Activated CD8-positive, alpha-beta T cell treated with anti-CD3 and anti-CD28 coated beads, Interleukin-2, amount 10 ng/mL, durations not matched to agents 7 days and 5 days (primary cell): ENCODE measurements at regions of chr19 and their contacts with region 1.

Region 1: DNA sequence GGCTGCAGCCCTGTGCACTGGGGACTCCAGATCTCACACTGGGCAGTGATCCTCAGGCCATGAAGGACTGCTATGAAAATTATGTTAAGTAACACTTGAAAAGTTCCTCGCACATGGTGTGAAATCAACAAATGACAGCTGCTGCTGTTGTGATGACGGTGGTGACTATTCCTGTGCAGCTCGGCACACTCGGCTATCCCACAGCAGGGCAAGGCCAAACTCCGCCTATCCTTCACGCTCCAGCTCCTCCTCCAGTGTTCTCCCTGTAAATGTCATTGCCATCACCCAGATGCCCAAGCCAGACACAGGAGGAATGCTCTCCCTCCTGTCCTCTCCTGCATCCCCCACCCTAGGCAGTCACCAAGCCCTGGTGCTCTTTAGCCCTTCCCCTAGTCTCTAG is 31.3 kb downstream of the GRIK5 start:
- DNase-seq: no peak
- ATAC-seq: no peak
- H3K4me3 Mint-ChIP-seq: no peak overlapping the region
- H3K27ac Mint-ChIP-seq: no peak overlapping the region
- H3K4me1 Mint-ChIP-seq: peaks cover 2% of the 10 kb centered on the region
- H3K27me3 Mint-ChIP-seq: peaks cover 2% of the 10 kb centered on the region

Region 2: DNA sequence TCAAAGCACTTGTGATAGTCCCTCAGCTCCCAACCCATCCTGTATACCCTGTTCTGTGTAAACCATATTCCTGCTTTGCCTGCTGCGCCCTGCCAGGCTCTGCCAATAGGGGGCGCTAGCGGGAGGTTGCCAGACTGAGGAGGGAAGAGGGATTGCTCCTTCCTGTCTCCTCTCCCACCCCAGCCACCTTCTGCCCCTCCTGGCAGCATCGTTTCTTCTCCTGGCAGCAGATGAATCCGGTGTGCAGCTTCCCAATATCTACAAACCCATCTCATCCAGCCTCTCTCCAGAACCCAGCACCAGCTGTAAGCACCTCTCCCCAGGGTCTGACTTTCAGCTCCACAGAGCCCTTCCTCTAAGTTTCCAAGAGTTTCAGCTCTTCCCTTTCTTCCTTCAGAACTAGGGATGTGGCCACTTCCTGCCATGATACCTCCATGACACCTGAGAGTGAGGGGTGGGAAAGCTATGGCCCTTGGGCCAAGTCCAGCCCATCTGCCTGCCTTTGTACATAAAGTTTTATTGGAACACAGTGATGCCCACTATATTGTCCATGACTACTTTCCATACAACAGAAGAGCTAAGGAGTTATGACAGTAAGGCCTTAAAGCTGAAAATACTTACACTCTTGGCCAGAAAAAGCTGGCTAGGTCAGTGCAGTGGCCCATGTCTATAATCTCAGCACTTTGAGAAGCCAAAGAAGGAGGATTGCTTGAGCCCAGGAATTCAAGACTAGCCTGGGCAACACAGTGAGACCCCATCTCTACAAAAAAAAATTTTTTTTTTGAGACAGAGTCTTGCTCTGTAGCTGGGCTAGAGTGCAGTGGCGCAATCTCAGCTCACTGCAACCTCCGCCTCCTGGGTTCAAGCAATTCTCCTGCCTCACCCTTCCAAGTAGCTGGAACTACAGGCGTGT is 10.1 kb before region 1 on chr19:
- CTCF ChIA-PET with region 1: interaction called, 11 read pairs
- POLR2A ChIA-PET with region 1: no interaction called
- DNase-seq: peak; percentile 41
- ATAC-seq: no peak
- H3K4me3 Mint-ChIP-seq: no peak overlapping the region
- H3K27ac Mint-ChIP-seq: no peak overlapping the region
- H3K4me1 Mint-ChIP-seq: no peaks in the 10 kb centered on the region
- H3K27me3 Mint-ChIP-seq: peaks cover 10% of the 10 kb centered on the region